Right lobe of liver (tissue), 6 donors: ENCODE measurements at regions of chr11 and their contacts with region 1.

Region 1: GRCh38 chr11:126332131-126332711 is 23.3 kb upstream of the ST3GAL4 start:
- DNase-seq: peak in 2 of 3 donors; percentile 63 to 76
- ATAC-seq: peak; percentile 0 to 9 (median 4)
- H3K4me3 ChIP-seq: no peak overlapping the region
- H3K27ac ChIP-seq: peak overlapping the region in 1 of 3 donors; percentile 34
- H3K4me1 ChIP-seq: peaks cover 0 to 75% (median 23%) of the 10 kb centered on the region in 4 donors
- H3K27me3 ChIP-seq: no peaks in the 10 kb centered on the region
- CTCF ChIP-seq: no peak
- POLR2A ChIP-seq: no peak

Region 2: DNA sequence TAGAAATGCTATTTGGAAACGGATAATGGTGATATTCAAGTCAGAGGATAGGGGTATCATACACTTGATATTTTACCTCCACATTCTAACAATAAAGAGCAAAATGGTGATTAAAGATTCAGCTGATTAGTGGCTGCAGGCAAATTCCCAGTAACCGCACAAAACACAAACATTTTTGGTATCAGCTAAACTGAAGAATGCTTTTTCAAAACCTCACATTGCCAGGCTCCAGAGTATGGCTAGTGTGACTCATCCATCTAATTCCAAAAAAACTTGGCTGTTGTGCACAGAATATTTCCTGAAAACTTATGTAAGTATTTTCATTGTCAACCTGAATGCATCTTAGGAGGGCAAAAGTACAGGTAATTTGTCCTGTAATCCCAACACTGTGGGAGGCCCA is 74.5 kb before region 1 on chr11:
- intact Hi-C with region 1: no loop called
- DNase-seq: no peak
- ATAC-seq: no peak
- H3K4me3 ChIP-seq: no peak overlapping the region
- H3K27ac ChIP-seq: no peak overlapping the region
- H3K4me1 ChIP-seq: no peaks in the 10 kb centered on the region
- H3K27me3 ChIP-seq: no peaks in the 10 kb centered on the region
- CTCF ChIP-seq: no peak
- POLR2A ChIP-seq: no peak

Region 3: DNA sequence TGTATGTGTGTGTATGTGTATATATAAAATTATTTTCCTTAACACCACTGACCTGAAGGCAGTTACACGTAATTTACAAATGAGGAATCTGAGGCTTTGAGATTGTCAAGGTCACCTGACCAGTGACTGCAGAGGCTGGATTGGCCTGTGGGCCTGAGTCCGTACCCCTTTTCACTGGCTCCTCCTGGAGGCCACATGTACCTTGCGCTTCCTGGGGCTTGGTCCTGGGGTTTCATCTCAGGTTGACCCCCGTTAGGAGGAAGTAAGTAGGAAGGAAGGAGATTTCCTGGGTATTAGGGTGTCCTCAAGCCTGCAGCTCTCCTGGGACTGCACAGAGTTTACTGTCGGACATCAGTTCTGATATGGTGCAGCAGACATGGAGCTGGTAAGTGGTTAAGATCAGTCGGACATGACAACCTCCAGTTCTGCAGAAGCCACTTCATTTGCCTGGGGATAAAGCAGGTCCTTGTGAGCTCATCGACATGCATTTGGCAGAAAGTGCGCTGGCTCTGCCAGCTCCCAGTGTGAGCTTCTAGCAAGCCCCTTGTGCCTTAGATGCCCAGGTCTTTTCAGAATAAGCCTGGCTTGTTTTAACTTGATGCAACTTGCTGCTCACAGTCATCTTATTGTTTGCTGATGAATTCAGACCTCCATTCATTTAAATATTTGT is 59.9 kb after region 1 on chr11:
- intact Hi-C with region 1: loop called in 1 of 2 experiments (anchors 10 kb)
- DNase-seq: no peak
- ATAC-seq: peak; percentile 54 to 74 (median 60)
- H3K4me3 ChIP-seq: no peak overlapping the region
- H3K27ac ChIP-seq: no peak overlapping the region
- H3K4me1 ChIP-seq: peaks cover 0 to 11% (median 2%) of the 10 kb centered on the region in 4 donors
- H3K27me3 ChIP-seq: no peaks in the 10 kb centered on the region
- CTCF ChIP-seq: peak in 3 of 4 donors; percentile 13 to 24 (median 23)
- POLR2A ChIP-seq: no peak